GM12878 (cell line): ENCODE measurements at regions of chr11 and their contacts with region 1.

Region 1: DNA sequence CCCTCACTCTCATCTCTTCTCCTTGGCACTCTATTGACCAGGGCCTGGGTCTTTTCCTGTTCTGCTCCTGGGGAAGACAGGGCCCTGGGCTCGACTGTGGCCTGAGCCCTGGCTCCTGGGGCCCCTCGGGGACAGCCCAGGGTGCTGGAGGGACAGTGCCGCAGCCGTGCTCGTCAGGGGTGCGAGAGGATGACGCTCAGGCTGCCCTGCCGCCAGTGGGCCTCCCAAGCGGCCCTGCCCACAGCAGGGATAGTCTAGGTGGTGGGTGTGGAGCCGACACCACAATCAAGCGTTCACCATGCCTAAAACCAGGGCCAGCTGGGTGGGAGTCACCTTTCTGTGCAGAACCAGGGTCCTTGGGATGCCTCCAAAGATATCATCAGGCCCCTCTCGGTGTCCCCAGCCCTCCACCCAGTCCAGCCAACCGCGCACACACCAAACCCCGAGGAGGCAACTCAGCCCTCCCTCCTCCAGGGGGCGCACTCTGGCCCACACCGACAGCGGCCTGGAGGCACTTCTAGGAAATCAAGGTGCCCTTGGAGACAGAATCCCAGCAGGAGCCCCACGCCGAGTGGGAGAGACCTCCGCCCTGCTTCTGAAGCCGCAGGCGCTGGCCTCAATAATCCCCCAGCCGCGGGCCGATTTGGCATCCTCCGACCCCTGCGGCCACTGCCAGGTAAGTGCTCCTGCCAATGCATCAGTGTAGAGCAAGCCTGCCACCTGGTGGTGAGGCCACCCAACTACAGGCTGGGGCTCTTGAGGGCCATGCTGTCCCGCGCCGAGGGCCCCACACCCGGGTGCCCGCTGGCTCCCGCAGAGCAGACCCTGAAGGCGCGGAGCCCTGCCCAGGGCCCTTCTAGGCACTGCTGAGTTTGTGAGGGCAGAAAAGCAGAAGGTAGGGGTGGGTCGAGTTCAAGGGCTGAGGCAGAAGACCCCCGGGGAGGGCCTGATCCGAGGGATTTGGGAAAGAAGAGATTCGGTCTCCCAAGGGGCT is 496.4 kb downstream of the BUD13 start:
- DNase-seq: no peak
- ATAC-seq: peak; percentile 97
- H3K4me3 ChIP-seq: no peak overlapping the region
- H3K27ac ChIP-seq: no peak overlapping the region
- H3K4me1 ChIP-seq: no peaks in the 10 kb centered on the region
- H3K27me3 ChIP-seq: no peaks in the 10 kb centered on the region; a peak in 1 of 4 replicates
- CTCF ChIP-seq: peak; percentile 67 to 90 (median 87)
- EP300 ChIP-seq: no peak
- POLR2A ChIP-seq: no peak
- RAD21 ChIP-seq: peak; percentile 92

Region 2: GRCh38 chr11:115324581-115325432 is 951.5 kb before region 1 on chr11:
- CTCF ChIA-PET with region 1: interaction called, 6 read pairs
- POLR2A ChIA-PET with region 1: no interaction called
- RAD21 ChIA-PET with region 1: interaction called, 3 read pairs
- SMC1A ChIA-PET with region 1: no interaction called
- in situ Hi-C with region 1: loop called (anchors 5 kb)
- intact Hi-C with region 1: loop called (anchors 1 kb)
- DNase-seq: peak; percentile 13
- ATAC-seq: peak; percentile 94
- H3K4me3 ChIP-seq: no peak overlapping the region
- H3K27ac ChIP-seq: no peak overlapping the region
- H3K4me1 ChIP-seq: no peaks in the 10 kb centered on the region
- H3K27me3 ChIP-seq: peaks cover 0 to 2% of the 10 kb centered on the region in 2 experiments; a peak in 3 of 4 replicates
- CTCF ChIP-seq: peak; percentile 76 to 93 (median 83)
- EP300 ChIP-seq: no peak
- POLR2A ChIP-seq: no peak
- RAD21 ChIP-seq: peak; percentile 92

Region 3: DNA sequence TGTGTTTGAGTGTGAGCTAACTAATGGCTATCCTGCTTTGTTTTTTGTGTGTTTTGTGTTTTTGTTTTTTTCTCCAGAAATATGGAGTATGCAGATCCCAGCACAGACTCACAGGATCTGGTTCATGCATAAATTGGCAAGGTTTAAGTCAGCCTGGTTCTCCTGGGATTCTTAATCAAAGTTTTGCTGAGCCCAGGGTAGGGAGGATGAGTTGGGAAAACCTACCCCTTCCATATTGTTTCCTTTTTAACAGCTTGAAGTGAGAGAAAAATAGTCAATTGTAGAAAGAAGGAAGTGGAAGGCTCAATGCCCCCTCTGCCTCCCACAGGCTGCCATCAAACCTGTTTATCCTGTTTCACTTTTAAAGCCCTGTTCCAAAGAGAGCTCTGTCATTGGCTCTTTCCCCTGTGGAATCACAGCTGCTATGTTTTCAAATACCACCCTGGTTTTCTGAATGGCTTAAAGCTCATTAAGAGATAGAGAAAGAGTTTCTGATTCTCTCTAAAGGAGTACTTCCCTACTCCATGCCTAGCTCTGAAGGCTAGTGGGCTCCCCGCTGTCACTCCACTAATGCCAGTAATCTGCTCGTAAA is 748.7 kb before region 1 on chr11:
- CTCF ChIA-PET with region 1: no interaction called
- POLR2A ChIA-PET with region 1: no interaction called
- RAD21 ChIA-PET with region 1: no interaction called
- SMC1A ChIA-PET with region 1: no interaction called
- in situ Hi-C with region 1: no loop called
- intact Hi-C with region 1: loop called (anchors 10 kb)
- DNase-seq: no peak
- ATAC-seq: no peak
- H3K4me3 ChIP-seq: no peak overlapping the region
- H3K27ac ChIP-seq: no peak overlapping the region
- H3K4me1 ChIP-seq: no peaks in the 10 kb centered on the region
- H3K27me3 ChIP-seq: peaks cover 0 to 2% of the 10 kb centered on the region in 2 experiments; a peak in 1 of 4 replicates
- CTCF ChIP-seq: no peak
- EP300 ChIP-seq: no peak
- POLR2A ChIP-seq: no peak
- RAD21 ChIP-seq: no peak

Region 4: GRCh38 chr11:116540645-116541304 is 264.4 kb after region 1 on chr11:
- CTCF ChIA-PET with region 1: no interaction called
- POLR2A ChIA-PET with region 1: no interaction called
- RAD21 ChIA-PET with region 1: no interaction called
- SMC1A ChIA-PET with region 1: no interaction called
- in situ Hi-C with region 1: no loop called
- intact Hi-C with region 1: no loop called
- DNase-seq: no peak
- ATAC-seq: no peak
- H3K4me3 ChIP-seq: no peak overlapping the region
- H3K27ac ChIP-seq: no peak overlapping the region
- H3K4me1 ChIP-seq: no peaks in the 10 kb centered on the region
- H3K27me3 ChIP-seq: peaks cover 4 to 6% of the 10 kb centered on the region in 2 experiments
- CTCF ChIP-seq: no peak
- EP300 ChIP-seq: no peak
- POLR2A ChIP-seq: no peak
- RAD21 ChIP-seq: no peak